ENCODE measurements at regions of chr4 and their contacts with region 1.

Region 1: DNA sequence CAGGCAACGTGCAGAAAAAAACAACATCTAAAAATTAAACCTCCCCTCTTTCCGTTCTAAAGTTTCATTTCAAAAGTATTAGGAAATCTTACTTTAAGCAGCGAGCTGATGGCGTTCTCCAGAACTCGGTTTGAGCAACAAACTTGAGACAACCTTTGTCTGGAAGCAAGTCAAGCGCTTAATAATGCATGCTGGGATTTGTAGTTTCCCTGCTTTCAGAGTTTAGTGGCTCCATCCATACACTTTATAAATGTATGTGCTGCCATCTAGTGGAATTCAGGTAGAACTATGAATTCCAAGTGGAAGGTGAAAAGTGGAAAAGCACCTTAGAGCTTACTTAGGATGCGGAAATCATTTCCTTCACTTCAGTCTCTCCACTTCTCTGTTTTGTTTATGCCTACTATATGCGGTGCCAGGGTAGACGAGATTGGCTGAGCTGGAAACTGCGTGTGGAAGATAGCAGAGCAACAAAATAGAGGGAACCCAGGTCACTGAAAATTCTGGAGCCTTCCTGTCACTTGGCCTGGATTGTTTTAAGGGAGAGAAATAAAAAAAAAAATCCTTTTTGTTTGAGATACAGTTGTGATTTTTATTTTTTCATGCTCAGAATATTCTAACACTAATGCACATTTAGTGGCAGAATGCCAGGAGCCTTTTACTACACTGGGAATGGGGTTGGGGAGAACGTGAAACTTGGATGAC is at the start of gene BDH2:
- DNase-seq: peak; percentile 71
- ATAC-seq: peak; percentile 96
- H3K4me3 Mint-ChIP-seq: peak within 1 kb of the TSS; percentile 78
- H3K27ac Mint-ChIP-seq: peak within 1 kb of the TSS; percentile 72
- H3K4me1 Mint-ChIP-seq: peaks cover 22% of the 10 kb centered on the region
- H3K27me3 Mint-ChIP-seq: no peaks in the 10 kb centered on the region
- total RNA-seq, gene BDH2: 19.5 to 22.7 TPM

Region 2: DNA sequence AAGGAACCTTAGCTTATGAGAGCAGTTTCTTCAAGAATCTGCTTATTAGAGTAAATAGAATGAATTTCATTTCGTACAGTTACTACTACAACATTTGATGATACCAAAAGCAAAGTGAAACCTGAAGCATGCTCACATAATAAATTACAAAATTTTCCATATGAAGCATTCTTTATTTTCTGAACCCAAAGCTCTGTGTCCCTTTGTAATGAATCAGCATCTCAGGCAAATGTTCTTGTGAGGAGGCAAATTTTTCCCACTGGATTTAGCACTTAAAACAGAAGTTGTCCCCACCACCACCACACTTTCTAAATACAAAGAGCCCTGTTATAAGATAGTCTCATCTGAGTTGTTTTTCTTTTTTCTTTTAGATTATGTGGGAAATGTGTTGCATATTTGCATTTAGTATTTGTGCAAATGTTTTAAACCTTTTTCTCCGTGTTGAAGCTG is 669.4 kb before region 1 on chr4:
- CTCF ChIA-PET with region 1: interaction called, 15 read pairs
- POLR2A ChIA-PET with region 1: no interaction called
- DNase-seq: no peak
- ATAC-seq: peak; percentile 4
- H3K4me3 Mint-ChIP-seq: peak overlapping the region; percentile 88
- H3K27ac Mint-ChIP-seq: peak overlapping the region; percentile 89
- H3K4me1 Mint-ChIP-seq: peaks cover 15% of the 10 kb centered on the region
- H3K27me3 Mint-ChIP-seq: peaks cover 2% of the 10 kb centered on the region

Region 3: GRCh38 chr4:102836596-102836995 is 263.2 kb before region 1 on chr4:
- CTCF ChIA-PET with region 1: no interaction called
- POLR2A ChIA-PET with region 1: no interaction called
- DNase-seq: no peak
- ATAC-seq: no peak
- H3K4me3 Mint-ChIP-seq: no peak overlapping the region
- H3K27ac Mint-ChIP-seq: no peak overlapping the region
- H3K4me1 Mint-ChIP-seq: peaks cover 12% of the 10 kb centered on the region
- H3K27me3 Mint-ChIP-seq: no peaks in the 10 kb centered on the region

Region 4: DNA sequence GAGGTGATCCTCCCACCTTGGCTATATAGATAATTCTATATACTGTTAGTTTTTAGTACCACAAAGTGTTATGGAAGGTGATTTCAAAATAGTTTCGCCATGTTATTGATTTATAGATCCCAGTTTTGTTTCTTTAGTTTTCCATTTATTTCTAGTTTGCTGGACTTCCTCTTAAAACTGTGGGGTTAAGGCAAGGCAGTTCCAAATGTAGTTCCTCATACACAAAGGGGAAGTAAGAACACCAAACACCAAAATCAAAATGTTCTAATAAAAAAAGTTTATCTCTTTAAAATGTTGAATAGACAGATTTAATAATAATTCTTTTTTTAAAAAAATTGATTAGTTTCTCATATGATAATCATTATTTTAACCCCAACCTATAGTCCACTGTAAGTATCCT is 237.8 kb before region 1 on chr4:
- CTCF ChIA-PET with region 1: no interaction called
- POLR2A ChIA-PET with region 1: no interaction called
- DNase-seq: no peak
- ATAC-seq: no peak
- H3K4me3 Mint-ChIP-seq: no peak overlapping the region
- H3K27ac Mint-ChIP-seq: no peak overlapping the region
- H3K4me1 Mint-ChIP-seq: peaks cover 35% of the 10 kb centered on the region
- H3K27me3 Mint-ChIP-seq: no peaks in the 10 kb centered on the region

Region 5: DNA sequence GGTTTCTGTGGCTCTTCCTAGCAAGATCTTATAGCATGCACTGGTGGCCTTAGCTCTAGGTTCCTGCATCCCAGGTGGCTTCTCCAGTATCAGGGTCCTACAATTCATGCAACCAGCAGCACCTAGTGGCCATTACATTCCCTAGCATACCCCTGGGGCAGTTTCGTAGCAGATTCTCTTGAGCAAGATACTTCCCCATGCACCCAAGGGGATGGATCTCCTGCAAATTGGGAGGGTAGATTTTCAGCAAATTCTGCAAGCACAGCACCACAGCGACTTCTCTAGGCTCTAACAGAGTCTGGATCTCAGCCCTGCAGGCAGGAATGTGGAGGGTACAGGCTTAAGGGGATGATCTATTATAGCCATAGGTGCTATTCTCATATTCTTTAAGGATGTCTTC is 67.3 kb before region 1 on chr4:
- CTCF ChIA-PET with region 1: interaction called, 11 read pairs
- POLR2A ChIA-PET with region 1: no interaction called
- DNase-seq: peak; percentile 43
- ATAC-seq: peak; percentile 85
- H3K4me3 Mint-ChIP-seq: no peak overlapping the region
- H3K27ac Mint-ChIP-seq: peak overlapping the region; percentile 18
- H3K4me1 Mint-ChIP-seq: peaks cover 18% of the 10 kb centered on the region
- H3K27me3 Mint-ChIP-seq: no peaks in the 10 kb centered on the region

Region 6: DNA sequence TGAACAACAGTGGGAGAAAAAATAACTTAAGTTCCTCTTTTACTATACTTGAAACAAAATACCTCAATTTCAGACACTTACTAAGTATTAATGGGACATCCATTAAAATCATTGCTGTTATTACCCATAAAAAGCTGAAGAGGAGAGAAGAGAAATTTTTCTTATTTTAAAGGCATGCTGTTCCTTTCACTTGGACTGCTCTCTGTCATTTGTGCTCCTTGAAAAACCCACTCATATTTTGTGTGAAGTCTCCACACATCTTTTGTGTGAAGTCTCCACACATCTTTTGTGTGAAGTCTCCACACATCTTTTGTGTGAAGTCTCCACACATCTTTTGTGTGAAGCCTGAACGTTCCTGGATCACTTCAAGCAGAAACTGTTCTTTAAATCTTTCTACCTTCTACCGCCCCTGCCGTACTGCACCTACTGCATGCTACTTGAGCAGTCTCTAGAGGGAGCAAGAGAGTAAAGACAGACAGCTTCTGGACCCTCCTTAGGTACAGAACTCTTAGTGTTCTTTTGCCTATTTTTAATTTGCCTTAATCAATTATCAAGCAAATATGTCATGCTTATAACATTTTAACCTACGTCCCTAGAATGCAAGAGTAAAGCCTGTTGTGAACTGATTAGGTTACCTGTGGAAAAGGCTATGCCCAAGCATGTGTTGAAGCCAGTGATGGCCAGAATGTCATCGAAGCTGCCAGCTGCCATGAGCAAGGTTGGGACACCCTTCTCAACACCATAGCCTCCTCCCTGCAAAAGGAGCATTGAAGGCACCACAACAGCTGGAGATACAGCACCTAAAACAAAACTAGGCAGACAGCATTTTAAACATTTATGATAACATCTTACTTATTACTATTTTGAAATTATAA is 53.2 kb before region 1 on chr4:
- CTCF ChIA-PET with region 1: interaction called, 31 read pairs
- POLR2A ChIA-PET with region 1: no interaction called
- DNase-seq: peak; percentile 47
- ATAC-seq: peak; percentile 95
- H3K4me3 Mint-ChIP-seq: no peak overlapping the region
- H3K27ac Mint-ChIP-seq: no peak overlapping the region
- H3K4me1 Mint-ChIP-seq: peaks cover 2% of the 10 kb centered on the region
- H3K27me3 Mint-ChIP-seq: no peaks in the 10 kb centered on the region

Region 7: DNA sequence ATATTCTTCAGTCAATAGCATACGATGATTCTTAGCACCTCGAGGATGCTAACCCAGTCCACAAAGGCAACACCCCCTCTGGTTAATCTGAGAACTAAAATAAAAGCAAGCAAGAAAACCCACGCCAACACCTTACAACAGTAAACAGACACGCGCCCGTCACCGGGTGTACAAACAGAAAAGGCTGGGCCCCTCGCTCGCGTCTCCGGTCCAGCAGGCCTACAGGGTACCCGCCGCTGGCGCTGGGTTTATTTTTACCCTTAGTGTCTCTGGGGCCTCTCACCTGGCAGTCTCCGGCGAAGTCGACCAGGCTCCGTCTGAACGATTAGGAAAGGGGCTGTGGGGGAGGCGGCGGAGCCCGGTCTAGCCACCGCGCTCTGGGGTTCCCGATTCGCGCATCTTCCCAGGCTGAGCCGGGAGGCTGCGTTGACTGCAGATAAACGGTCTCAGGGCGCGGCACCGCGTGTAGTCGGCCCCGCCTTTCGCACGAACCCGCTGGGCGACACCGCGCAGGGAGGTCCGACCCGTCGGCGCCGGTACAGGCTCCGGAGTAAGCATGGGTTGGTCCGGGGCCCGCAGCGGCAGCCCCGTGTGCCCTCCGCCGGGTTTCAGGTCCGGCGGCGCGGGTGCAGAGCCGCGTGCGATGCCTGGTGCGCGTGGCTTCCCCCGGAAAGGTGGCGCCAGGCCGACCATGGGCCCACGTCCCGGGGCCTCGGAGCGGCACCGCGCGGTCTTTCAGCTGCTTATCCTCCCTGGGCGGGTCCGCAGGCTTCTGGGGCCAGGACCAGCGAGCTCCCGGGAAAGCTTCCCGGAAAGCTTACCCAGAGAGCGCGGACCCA is 23.7 kb before region 1 on chr4:
- CTCF ChIA-PET with region 1: interaction called, 25 read pairs
- POLR2A ChIA-PET with region 1: no interaction called
- DNase-seq: peak; percentile 74
- ATAC-seq: peak; percentile 79
- H3K4me3 Mint-ChIP-seq: peak overlapping the region; percentile 98
- H3K27ac Mint-ChIP-seq: peak overlapping the region; percentile 99
- H3K4me1 Mint-ChIP-seq: peaks cover 48% of the 10 kb centered on the region
- H3K27me3 Mint-ChIP-seq: no peaks in the 10 kb centered on the region

Region 8: GRCh38 chr4:103193457-103193856 is 93.6 kb after region 1 on chr4:
- CTCF ChIA-PET with region 1: no interaction called
- POLR2A ChIA-PET with region 1: no interaction called
- DNase-seq: no peak
- ATAC-seq: no peak
- H3K4me3 Mint-ChIP-seq: no peak overlapping the region
- H3K27ac Mint-ChIP-seq: no peak overlapping the region
- H3K4me1 Mint-ChIP-seq: peaks cover 22% of the 10 kb centered on the region
- H3K27me3 Mint-ChIP-seq: no peaks in the 10 kb centered on the region

Measured in activated CD8-positive, alpha-beta T cell treated with anti-CD3 and anti-CD28 coated beads, Interleukin-2, amount 10 ng/mL, durations not matched to agents 7 days and 5 days (primary cell).